ENCODE measurements at regions of chr3 and their contacts with region 1.

Region 1: DNA sequence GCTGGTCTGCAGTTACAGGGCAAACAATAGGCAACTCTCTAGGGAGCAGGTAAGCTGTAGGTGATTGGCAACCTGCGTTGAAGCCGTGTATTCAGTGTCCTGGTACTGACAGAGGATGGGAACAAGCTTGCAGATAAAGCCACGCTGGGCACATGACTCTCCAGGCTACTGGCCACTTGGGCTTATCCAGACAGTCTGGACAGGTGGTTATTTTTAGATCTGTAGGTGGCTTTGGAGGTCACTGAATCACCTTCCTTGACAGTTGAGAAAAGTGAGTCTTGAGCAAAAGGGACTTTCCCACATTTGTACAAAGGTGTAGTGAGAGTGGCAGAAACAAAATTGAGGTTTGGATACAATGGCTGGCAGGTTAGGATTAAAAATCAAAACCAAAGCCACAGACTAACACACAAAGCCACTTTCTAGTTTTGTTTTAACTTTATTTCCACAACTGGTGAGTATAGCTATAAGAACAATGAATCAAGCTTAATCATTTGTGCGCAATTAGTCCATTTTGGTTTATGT is 22.3 kb upstream of the IL1RAP start:
- DNase-seq: no peak
- H3K4me3 Mint-ChIP-seq: no peak overlapping the region
- H3K27ac Mint-ChIP-seq: no peak overlapping the region
- H3K4me1 Mint-ChIP-seq: peaks cover 35% of the 10 kb centered on the region
- H3K27me3 Mint-ChIP-seq: peaks cover 73% of the 10 kb centered on the region

Region 2: GRCh38 chr3:190443257-190443656 is 48.3 kb before region 1 on chr3:
- intact Hi-C with region 1: loop called (anchors 5 kb)
- DNase-seq: no peak
- H3K4me3 Mint-ChIP-seq: no peak overlapping the region
- H3K27ac Mint-ChIP-seq: no peak overlapping the region
- H3K4me1 Mint-ChIP-seq: peaks cover 10% of the 10 kb centered on the region
- H3K27me3 Mint-ChIP-seq: peaks cover 22% of the 10 kb centered on the region

Region 3: DNA sequence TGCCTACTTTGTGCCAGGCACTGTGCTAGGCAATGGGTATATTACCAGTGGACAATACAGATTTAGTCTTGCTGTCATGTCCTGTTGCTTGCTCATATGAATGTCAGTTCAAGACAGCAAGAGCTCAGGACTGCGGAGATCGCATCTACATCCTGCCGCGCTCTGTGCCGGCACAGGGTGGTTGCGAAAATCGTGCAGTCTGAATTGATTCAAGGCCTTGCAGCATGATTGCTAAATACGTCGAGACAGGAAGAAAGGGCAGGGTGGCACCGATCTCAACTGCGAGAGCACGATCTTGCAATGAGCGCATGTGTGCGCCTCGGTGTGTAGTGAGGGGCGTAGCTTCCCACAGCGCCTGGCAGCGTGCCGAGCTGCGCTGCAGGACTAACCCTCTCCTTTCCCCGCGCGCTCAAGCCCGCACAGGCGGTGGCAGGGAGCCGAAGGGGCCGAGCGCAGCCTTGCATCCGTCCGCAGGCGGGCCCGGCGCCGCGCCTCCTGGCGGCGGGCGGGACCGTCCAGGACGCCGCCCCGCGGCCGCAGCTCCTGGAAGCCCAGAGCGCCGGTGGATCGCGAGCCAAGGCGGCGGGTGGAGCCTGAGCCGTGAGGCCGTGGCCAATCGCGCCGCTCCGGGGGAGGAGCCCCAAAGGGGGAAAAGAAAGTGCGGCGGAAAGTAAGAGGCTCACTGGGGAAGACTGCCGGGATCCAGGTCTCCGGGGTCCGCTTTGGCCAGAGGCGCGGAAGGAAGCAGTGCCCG is 22.0 kb after region 1 on chr3 and contains the start of gene IL1RAP:
- intact Hi-C with region 1: loop called (anchors 1 kb)
- DNase-seq: peak; percentile 89
- H3K4me3 Mint-ChIP-seq: peak within 1 kb of the TSS; percentile 90
- H3K27ac Mint-ChIP-seq: peak within 1 kb of the TSS; percentile 97
- H3K4me1 Mint-ChIP-seq: peaks cover 39% of the 10 kb centered on the region
- H3K27me3 Mint-ChIP-seq: no peaks in the 10 kb centered on the region
- total RNA-seq, gene IL1RAP: 34.5 and 38.6 TPM in 2 replicates

Measured in activated T-helper 2 cell treated with anti-CD3 and anti-CD28 coated beads, Interferon-gamma antibody, Interleukin-2, Interleukin-4, amounts not matched to agents 10 μg/mL and 5 μg/mL and 100 μg/mL, durations not matched to agents 14 hours and 24 hours and 36 hours (primary cell).